Upper lobe of right lung (tissue), 1 donor: ENCODE measurements at regions of chr22 and their contacts with region 1.

Region 1: GRCh38 chr22:36194971-36195370 is 6.6 kb downstream of the APOL4 start:
- DNase-seq: no peak
- ATAC-seq: peak; percentile 86
- H3K4me3 ChIP-seq: no peak overlapping the region
- H3K27ac ChIP-seq: no peak overlapping the region
- H3K4me1 ChIP-seq: peaks cover 15% of the 10 kb centered on the region
- H3K27me3 ChIP-seq: no peaks in the 10 kb centered on the region
- CTCF ChIP-seq: peak; percentile 78

Region 2: GRCh38 chr22:36156515-36157419 is 38.2 kb before region 1 on chr22:
- intact Hi-C with region 1: no loop called
- DNase-seq: peak; percentile 85
- ATAC-seq: peak; percentile 76
- H3K4me3 ChIP-seq: peak overlapping the region; percentile 59
- H3K27ac ChIP-seq: peak overlapping the region; percentile 91
- H3K4me1 ChIP-seq: peaks cover 84% of the 10 kb centered on the region
- H3K27me3 ChIP-seq: no peaks in the 10 kb centered on the region
- CTCF ChIP-seq: no peak

Region 3: DNA sequence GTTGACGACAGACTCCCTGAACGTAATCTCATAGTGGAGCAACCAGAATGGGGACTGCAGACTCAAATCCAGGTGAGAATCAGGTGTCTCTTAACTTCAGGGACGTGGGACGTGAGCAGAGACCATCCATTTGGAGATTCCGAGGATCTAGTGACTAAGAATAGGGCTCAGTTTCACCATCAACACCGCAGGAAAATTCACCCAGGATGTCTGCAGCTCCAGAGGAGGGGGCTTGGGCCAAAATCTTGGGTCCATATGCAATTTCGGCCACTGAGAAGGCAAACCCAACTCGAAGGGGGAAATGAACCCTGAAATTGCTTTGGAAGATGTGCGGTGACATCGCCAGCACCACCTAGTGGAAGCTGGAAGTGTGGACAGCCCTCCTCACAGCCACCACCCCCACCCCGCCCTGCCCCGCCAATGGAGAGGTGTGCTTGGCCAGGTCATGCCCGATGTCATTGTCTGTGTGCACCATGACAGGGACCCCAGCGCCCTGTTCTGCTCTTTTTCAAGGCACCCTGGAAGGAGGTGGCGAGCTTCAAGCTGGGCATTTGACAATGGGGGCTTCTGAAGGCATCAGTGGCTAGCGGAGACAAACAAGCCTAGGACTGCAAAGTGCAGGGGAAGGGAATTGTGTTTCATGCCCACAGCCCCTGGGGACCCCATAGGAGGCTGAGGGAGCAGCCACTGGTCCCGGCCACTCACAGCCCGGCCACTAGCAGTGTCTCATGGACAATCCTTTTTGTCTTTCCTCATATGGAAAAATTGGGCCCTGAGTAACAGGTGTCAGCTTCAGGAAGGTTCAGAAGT is 82.7 kb after region 1 on chr22:
- intact Hi-C with region 1: loop called (anchors 10 kb)
- DNase-seq: peak; percentile 77
- ATAC-seq: peak; percentile 87
- H3K4me3 ChIP-seq: no peak overlapping the region
- H3K27ac ChIP-seq: no peak overlapping the region
- H3K4me1 ChIP-seq: peaks cover 8% of the 10 kb centered on the region
- H3K27me3 ChIP-seq: no peaks in the 10 kb centered on the region
- CTCF ChIP-seq: peak; percentile 82